ENCODE measurements at regions of chr1 and their contacts with region 1.

Region 1: DNA sequence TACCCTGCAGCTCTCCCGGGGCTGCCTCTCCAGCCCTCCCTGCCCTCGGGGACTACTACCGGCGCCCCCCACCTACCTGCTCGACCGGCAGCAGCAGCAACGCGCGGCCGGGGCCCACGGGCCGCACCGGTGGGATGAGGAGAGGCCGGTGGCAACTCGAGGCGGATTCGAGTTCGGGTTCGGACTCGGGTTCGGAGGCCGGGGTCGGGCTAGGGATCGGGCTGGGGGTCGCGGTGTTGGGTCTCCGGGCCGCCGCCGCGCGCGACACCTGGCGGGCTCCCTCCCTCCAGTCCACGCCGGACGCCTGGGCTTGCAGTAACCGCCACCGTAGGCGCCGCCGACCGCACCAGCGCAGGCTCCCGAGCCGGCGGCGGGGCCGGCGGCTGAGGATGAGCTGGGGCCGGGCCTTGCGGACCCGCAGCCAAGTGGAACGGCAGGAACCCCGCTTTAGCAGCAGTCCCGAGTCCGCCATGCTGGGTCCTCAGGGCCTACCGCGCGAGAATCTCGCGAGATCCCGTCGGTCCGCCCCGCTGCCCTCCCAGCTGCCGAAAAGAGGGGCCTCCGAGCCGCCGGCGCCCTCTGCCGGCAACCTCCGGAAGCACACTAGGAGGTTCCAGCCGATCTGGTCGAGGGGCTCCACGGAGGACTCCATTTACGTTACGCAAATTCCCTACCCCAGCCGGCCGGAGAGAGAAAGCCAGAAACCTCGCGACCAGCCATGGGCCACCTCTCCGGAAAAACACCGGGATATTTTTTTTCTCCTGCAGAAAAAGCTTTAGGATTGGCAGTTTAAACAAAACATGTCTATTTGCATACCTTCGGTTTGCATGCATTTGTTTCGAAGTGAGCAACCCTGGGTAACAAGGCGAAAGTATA is at the start of gene NOL9:
- DNase-seq: peak; percentile 97
- ATAC-seq: peak; percentile 100
- H3K4me3 Mint-ChIP-seq: peak within 1 kb of the TSS; percentile 82
- H3K27ac Mint-ChIP-seq: peak within 1 kb of the TSS; percentile 67
- H3K4me1 Mint-ChIP-seq: peaks cover 18% of the 10 kb centered on the region
- H3K27me3 Mint-ChIP-seq: no peaks in the 10 kb centered on the region
- CTCF ChIP-seq: peak; percentile 94
- total RNA-seq, gene NOL9: 39.7 to 40.4 TPM

Region 2: GRCh38 chr1:6574025-6574620 is 19.9 kb after region 1 on chr1:
- CTCF ChIA-PET with region 1: interaction called, 22 read pairs
- POLR2A ChIA-PET with region 1: interaction called, 6 read pairs
- intact Hi-C with region 1: no loop called
- DNase-seq: no peak
- ATAC-seq: no peak
- H3K4me3 Mint-ChIP-seq: no peak overlapping the region
- H3K27ac Mint-ChIP-seq: no peak overlapping the region
- H3K4me1 Mint-ChIP-seq: peaks cover 5% of the 10 kb centered on the region
- H3K27me3 Mint-ChIP-seq: no peaks in the 10 kb centered on the region
- CTCF ChIP-seq: no peak

Region 3: DNA sequence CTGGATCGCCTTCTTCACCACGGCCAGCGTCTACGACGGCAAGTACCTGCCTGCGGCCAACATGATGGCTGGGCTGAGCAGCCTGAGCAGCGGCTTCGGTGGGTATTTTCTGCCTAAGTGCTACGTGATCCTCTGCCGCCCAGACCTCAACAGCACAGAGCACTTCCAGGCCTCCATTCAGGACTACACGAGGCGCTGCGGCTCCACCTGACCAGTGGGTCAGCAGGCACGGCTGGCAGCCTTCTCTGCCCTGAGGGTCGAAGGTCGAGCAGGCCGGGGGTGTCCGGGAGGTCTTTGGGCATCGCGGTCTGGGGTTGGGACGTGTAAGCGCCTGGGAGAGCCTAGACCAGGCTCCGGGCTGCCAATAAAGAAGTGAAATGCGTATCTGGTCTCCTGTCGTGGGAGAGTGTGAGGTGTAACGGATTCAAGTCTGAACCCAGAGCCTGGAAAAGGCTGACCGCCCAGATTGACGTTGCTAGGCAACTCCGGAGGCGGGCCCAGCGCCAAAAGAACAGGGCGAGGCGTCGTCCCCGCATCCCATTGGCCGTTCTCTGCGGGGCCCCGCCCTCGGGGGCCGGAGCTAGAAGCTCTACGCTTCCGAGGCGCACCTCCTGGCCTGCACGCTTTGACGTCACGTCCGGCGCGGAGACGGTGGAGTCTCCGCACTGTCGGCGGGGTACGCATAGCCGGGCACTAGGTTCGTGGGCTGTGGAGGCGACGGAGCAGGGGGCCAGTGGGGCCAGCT is 25.3 kb after region 1 on chr1 and contains the start of gene ZBTB48:
- CTCF ChIA-PET with region 1: interaction called, 22 read pairs
- POLR2A ChIA-PET with region 1: interaction called, 13 read pairs
- intact Hi-C with region 1: no loop called
- DNase-seq: peak; percentile 98
- ATAC-seq: peak; percentile 99
- H3K4me3 Mint-ChIP-seq: peak within 1 kb of the TSS; percentile 94
- H3K27ac Mint-ChIP-seq: peak within 1 kb of the TSS; percentile 95
- H3K4me1 Mint-ChIP-seq: peaks cover 26% of the 10 kb centered on the region
- H3K27me3 Mint-ChIP-seq: no peaks in the 10 kb centered on the region
- CTCF ChIP-seq: no peak
- total RNA-seq, gene ZBTB48: 22.4 to 32.1 TPM